ENCODE measurements at regions of chr16 and their contacts with region 1.

Region 1: GRCh38 chr16:71426072-71426879 is 15.6 kb downstream of the TLE7 start:
- DNase-seq: peak; percentile 83
- ATAC-seq: peak; percentile 88
- H3K4me3 Mint-ChIP-seq: peak overlapping the region; percentile 61
- H3K27ac Mint-ChIP-seq: peak overlapping the region; percentile 71
- H3K4me1 Mint-ChIP-seq: peaks cover 8% of the 10 kb centered on the region
- H3K27me3 Mint-ChIP-seq: peaks cover 27% of the 10 kb centered on the region
- CTCF ChIP-seq: no peak

Region 2: DNA sequence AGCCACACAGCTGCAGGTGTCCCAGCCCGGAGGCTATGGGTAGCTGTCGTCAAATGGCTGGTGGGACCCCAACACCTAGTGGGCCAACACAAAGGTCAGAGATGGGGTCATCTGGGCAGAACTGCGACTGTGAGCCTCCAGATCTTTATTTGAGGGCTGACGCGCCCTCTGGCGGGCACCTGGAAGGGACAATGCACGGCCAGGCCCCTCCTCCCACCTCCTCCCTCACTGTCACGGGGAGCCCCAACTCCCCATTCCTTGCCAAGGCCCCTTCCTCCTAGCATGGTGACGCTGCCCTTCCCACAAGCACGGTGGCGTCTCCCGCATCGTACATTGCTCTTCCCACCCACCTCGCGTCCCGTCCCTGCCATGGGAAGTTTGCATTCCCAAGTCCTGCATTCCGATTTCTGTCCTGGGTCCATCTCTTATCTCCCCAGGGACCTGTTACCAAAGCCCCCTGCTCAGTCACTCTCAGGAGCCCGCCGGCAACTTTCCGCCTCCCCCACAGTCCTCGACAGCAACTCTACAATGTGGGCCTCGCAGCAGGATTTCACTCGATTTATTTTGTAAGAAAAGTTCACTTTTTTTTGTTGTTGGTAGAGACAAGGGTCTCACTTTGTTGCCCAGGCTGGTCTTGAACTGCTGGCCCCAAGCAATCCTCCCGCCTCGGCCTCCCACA is 14.5 kb after region 1 on chr16:
- CTCF ChIA-PET with region 1: interaction called, 11 read pairs
- POLR2A ChIA-PET with region 1: interaction called, 4 read pairs
- intact Hi-C with region 1: no loop called
- DNase-seq: peak; percentile 52
- ATAC-seq: no peak
- H3K4me3 Mint-ChIP-seq: no peak overlapping the region
- H3K27ac Mint-ChIP-seq: no peak overlapping the region
- H3K4me1 Mint-ChIP-seq: no peaks in the 10 kb centered on the region
- H3K27me3 Mint-ChIP-seq: peaks cover 13% of the 10 kb centered on the region
- CTCF ChIP-seq: no peak

Measured in activated CD8-positive, alpha-beta T cell treated with anti-CD3 and anti-CD28 coated beads for 36 hours (primary cell).